Activated naive CD4-positive, alpha-beta T cell treated with anti-CD3 and anti-CD28 coated beads for 36 hours (primary cell): ENCODE measurements at regions of chr3 and their contacts with region 1.

Region 1: GRCh38 chr3:71583566-71584449 is at the start of gene FOXP1:
- DNase-seq: peak; percentile 63
- H3K4me3 Mint-ChIP-seq: peak within 1 kb of the TSS; percentile 95
- H3K27ac Mint-ChIP-seq: peak within 1 kb of the TSS; percentile 99
- H3K4me1 Mint-ChIP-seq: peaks cover 47% of the 10 kb centered on the region
- H3K27me3 Mint-ChIP-seq: no peaks in the 10 kb centered on the region
- total RNA-seq, gene FOXP1: 95.2 to 97.4 TPM

Region 2: GRCh38 chr3:70771426-70772147 is 812.2 kb before region 1 on chr3:
- CTCF ChIA-PET with region 1: no interaction called
- intact Hi-C with region 1: loop called (anchors 5 kb)
- DNase-seq: no peak
- H3K4me3 Mint-ChIP-seq: no peak overlapping the region
- H3K27ac Mint-ChIP-seq: no peak overlapping the region
- H3K4me1 Mint-ChIP-seq: peaks cover 14% of the 10 kb centered on the region
- H3K27me3 Mint-ChIP-seq: peaks cover 25% of the 10 kb centered on the region

Region 3: GRCh38 chr3:70973558-70973957 is 610.2 kb before region 1 on chr3:
- CTCF ChIA-PET with region 1: no interaction called
- intact Hi-C with region 1: no loop called
- DNase-seq: peak; percentile 30
- H3K4me3 Mint-ChIP-seq: no peak overlapping the region
- H3K27ac Mint-ChIP-seq: peak overlapping the region; percentile 88
- H3K4me1 Mint-ChIP-seq: peaks cover 34% of the 10 kb centered on the region
- H3K27me3 Mint-ChIP-seq: no peaks in the 10 kb centered on the region

Region 4: DNA sequence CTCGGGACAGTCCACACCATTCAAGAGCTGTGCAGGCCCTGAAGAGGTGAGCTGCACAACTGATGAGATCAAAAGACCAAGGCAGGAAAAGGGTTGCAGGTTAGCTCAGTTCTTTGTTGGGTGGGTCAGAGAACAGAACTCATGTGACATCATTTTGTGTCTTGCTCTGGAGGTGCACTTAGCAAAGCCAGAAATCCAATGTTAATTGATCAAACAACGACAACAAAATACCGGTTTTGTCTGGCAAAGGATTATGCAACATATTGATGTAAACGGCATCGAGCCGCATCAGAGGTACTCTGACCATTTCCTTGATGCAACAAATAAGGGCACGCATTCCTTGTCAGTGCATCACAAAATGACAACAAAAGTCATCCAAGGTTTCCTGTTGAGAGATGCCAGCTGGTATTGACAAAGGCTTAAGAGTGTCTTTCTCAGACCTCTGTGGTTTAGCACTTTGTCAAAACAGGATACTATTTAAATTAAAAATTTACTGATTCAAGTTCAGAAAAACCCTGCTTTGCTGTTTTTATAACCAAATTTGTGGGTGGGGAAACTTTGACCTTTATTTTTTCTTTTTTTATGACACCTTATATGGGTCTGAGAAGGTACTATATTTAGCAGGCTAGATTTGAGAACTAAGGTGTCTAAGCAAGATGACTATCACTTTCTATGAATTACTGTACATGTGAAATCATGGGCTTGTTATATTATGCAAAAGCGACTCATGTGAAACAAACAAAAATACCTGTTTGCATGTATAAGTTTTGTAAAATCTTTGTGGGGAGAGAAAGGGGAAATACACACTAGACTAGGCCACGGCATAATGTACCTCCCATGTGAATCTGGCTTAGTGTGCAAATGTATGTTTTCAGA is 496.4 kb before region 1 on chr3:
- CTCF ChIA-PET with region 1: no interaction called
- intact Hi-C with region 1: loop called (anchors 5 kb)
- DNase-seq: peak; percentile 69
- H3K4me3 Mint-ChIP-seq: peak overlapping the region; percentile 14
- H3K27ac Mint-ChIP-seq: peak overlapping the region; percentile 88
- H3K4me1 Mint-ChIP-seq: peaks cover 89% of the 10 kb centered on the region
- H3K27me3 Mint-ChIP-seq: no peaks in the 10 kb centered on the region

Region 5: DNA sequence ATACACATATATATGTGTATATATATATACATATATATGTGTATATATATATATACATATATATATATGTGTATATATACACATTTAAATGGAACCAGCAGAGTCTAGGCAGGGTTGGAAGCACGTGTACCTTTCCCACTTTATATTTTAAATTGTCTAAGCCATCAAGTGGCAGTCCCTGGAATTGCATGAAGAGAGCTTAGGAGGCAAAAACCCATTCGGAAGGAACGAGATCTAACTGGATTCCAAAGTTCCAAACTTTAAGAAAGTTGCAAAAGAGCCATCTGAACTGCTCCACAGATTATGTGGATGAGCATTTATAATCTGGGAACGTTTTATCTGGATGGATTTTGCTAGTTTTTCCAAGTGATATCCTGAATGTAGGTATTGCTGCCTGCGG is 186.8 kb before region 1 on chr3:
- CTCF ChIA-PET with region 1: interaction called, 5 read pairs
- intact Hi-C with region 1: loop called (anchors 2 kb)
- DNase-seq: peak; percentile 35
- H3K4me3 Mint-ChIP-seq: peak overlapping the region; percentile 5
- H3K27ac Mint-ChIP-seq: no peak overlapping the region
- H3K4me1 Mint-ChIP-seq: peaks cover 81% of the 10 kb centered on the region
- H3K27me3 Mint-ChIP-seq: no peaks in the 10 kb centered on the region

Region 6: DNA sequence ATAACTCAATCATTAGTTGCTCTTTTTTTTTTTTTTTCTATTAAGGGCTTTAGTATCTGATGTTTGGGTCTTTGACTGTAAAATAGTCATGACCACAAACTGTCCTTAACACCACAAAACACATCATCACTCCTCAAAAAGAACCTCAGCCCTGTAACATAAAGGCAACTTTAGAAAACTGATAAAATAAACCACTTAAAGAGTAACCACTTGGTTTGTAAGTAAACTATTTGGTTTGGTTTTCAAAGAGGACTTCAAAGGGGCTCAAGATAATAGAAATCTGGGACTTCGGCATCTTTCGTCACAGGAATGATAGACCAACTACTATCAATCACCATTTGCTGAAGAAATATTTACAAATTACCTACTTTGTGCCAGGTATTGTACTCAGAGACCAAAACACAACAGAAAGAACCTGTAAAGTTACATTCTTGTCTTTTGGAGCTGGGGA is 168.1 kb before region 1 on chr3:
- CTCF ChIA-PET with region 1: no interaction called
- intact Hi-C with region 1: no loop called
- DNase-seq: no peak
- H3K4me3 Mint-ChIP-seq: peak overlapping the region; percentile 69
- H3K27ac Mint-ChIP-seq: peak overlapping the region; percentile 72
- H3K4me1 Mint-ChIP-seq: peaks cover 89% of the 10 kb centered on the region
- H3K27me3 Mint-ChIP-seq: no peaks in the 10 kb centered on the region

Region 7: GRCh38 chr3:71489315-71489761 is 94.5 kb before region 1 on chr3:
- CTCF ChIA-PET with region 1: no interaction called
- intact Hi-C with region 1: loop called (anchors 1 kb)
- DNase-seq: peak; percentile 35
- H3K4me3 Mint-ChIP-seq: peak overlapping the region; percentile 67
- H3K27ac Mint-ChIP-seq: peak overlapping the region; percentile 88
- H3K4me1 Mint-ChIP-seq: peaks cover 88% of the 10 kb centered on the region
- H3K27me3 Mint-ChIP-seq: no peaks in the 10 kb centered on the region

Region 8: DNA sequence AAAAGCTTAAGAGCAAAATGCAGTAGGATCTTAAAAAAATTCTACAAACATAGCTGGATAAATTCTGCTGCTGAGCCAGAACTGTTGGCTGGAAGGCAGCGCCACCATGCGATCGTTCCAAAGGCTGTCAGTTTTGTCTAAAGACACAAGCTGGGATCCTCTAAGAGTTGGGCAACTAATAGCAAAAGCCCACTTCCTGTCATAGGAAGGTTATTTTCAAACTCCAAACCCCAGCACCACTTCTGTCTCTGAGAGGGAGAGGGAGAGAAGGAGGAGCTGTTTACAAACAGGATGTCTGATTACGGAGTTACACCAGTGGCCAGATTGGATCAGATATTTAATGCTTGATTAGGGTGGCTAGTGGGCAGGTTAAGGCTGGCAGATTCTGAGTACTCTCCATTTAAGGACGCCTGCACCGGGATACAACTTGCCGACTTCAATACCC is 97.4 kb after region 1 on chr3:
- CTCF ChIA-PET with region 1: no interaction called
- intact Hi-C with region 1: loop called (anchors 1 kb)
- DNase-seq: peak; percentile 79
- H3K4me3 Mint-ChIP-seq: no peak overlapping the region
- H3K27ac Mint-ChIP-seq: no peak overlapping the region
- H3K4me1 Mint-ChIP-seq: peaks cover 10% of the 10 kb centered on the region
- H3K27me3 Mint-ChIP-seq: no peaks in the 10 kb centered on the region

Region 9: DNA sequence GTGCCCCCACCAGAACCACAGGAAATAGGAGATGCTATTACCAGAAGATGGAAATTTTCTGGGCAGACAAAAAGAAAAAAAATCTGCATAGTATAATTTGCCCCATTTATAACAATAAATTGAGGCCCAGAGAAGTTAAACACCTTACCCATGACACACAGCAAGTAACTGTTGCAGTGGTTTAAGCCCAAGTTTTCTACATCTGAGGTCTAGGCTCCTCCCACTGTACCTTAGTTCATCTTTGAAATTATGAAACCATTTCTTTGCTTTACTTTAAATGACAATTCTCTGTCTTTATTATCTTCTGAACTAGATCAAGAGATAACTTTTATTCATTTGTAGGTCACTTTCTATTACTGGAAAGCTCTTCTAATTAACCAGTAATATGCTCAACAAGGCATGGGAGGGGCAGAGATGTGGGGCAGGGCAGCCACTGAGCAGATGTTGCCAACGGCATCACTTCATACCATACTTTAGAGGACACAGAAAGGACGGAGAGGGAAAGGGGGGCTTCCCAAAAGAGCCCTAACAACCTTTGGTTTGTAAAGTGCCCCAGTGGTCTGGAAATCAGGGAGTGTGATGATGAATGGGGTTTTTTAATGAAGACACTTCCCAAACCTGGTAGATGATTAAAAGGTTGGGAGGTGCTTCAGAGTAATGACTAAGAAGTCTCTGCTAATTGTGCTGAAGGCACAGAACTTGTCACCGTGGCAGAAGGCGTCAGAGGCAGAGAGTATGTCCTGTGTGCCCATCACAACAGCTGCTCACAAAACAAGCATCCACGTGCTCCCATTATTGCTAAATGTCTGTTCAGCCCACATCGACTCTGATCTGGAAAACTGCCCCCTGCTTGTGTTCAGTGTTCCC is 922.0 kb after region 1 on chr3:
- CTCF ChIA-PET with region 1: no interaction called
- intact Hi-C with region 1: no loop called
- DNase-seq: peak; percentile 42
- H3K4me3 Mint-ChIP-seq: no peak overlapping the region
- H3K27ac Mint-ChIP-seq: peak overlapping the region; percentile 24
- H3K4me1 Mint-ChIP-seq: peaks cover 14% of the 10 kb centered on the region
- H3K27me3 Mint-ChIP-seq: no peaks in the 10 kb centered on the region